PC-9 (cell line): ENCODE measurements at regions of chr7 and their contacts with region 1.

Region 1: GRCh38 chr7:151936207-151936606 is 20.0 kb upstream of the GALNTL5 start:
- DNase-seq: no peak
- H3K4me3 ChIP-seq: no peak overlapping the region
- H3K27ac ChIP-seq: no peak overlapping the region
- H3K4me1 ChIP-seq: peaks cover 29% of the 10 kb centered on the region
- H3K27me3 ChIP-seq: peaks cover 5% of the 10 kb centered on the region; the same call in 1 of the 2 replicates
- CTCF ChIP-seq: no peak

Region 2: DNA sequence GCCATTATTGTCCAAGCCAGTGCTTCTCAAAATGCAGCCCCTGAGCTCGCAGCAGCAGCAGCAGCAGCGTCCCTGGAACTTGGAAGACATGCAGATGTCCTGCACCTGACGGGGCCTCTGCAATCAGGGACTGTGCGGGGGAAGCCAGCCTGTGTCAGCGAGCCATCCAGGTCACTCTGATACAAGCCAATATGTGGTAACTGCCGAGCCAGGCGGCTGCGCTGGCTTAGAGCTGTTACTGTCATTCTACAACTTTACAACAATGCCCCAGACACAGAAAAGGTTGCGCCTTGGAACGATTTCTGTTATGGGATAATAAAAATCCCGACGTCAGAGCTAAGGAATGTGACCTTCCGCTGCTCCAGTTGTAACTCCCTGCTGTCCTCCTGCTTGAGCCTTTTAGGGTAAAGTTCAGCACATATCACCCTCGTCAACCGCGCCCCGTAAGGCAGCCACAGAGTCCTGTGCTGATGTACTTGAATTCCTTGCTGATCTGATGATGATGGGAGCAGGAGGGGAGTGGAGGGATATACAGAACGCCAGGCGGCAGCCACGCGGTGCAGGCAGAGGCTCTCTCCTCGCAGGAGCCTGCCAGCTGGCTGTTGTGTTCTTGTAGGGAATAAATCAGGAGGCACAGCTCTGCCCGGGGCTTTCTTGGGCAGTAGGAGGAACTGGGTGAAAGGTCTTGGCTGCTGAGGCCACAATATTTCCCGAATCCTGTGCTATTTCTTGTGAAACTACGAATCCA is 476.3 kb before region 1 on chr7:
- CTCF ChIA-PET with region 1: no interaction called
- POLR2A ChIA-PET with region 1: no interaction called
- intact Hi-C with region 1: loop called (anchors 2 kb)
- DNase-seq: peak; percentile 86 to 97
- H3K4me3 ChIP-seq: peak overlapping the region; percentile 44; the same call in 1 of the 2 replicates
- H3K27ac ChIP-seq: peak overlapping the region; percentile 75
- H3K4me1 ChIP-seq: peaks cover 29% of the 10 kb centered on the region
- H3K27me3 ChIP-seq: no peaks in the 10 kb centered on the region
- CTCF ChIP-seq: no peak

Region 3: DNA sequence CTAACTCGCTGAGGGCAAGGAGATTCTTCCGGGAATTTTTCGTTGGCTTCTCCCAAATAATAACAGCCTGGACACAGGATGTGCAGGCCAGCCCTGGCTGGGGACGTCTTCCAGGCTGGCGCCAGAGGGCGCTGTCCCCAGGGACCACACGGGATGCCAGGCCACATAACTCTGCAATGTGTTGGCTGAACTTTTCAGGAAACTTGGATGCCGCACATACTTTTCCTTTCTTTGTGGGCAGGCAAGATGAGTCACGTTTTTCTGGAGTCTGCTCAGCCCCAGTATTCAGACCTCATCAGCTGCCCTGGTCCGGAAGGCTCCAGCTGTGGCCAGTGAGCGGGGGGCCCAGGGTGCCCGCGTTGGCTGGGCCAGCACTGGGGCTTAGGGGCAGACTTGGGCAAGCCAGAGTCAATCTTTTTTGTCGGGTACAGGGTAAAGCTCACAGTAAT is 182.0 kb before region 1 on chr7:
- CTCF ChIA-PET with region 1: no interaction called
- POLR2A ChIA-PET with region 1: no interaction called
- intact Hi-C with region 1: loop called (anchors 2 kb)
- DNase-seq: peak; percentile 93 to 97
- H3K4me3 ChIP-seq: no peak overlapping the region
- H3K27ac ChIP-seq: no peak overlapping the region
- H3K4me1 ChIP-seq: peaks cover 15% of the 10 kb centered on the region
- H3K27me3 ChIP-seq: no peaks in the 10 kb centered on the region
- CTCF ChIP-seq: peak; percentile 99

Region 4: DNA sequence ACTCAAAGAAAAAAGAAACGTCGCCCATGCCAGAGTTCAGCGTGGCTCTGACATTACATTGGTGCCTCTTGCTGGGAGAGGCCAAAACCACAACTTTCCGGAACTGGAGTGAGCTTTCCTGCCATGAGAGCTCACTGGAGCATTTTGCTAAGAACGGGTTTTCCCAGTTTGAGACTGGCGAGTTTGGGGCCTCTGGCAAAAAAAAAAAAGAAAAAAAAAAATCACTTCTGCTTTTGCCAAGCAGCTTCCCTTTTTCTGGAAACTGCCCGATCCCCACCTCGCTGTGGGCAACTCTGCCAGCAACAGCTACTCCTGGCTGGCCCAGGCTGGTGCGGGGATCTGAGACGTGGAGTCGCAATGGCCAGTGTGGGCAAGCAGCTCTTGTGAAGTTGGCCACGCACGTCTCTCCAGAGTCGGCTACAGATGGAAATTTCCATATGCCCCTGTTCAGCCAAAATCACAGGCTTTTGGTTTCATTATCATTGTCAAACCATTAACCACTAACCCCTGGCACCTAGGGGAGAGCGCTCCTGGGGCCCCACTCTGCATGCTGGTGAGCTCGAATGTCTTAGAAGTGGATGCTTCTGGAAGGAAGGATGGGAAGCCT is 85.0 kb before region 1 on chr7:
- CTCF ChIA-PET with region 1: no interaction called
- POLR2A ChIA-PET with region 1: no interaction called
- intact Hi-C with region 1: loop called (anchors 1 kb)
- DNase-seq: peak; percentile 77 to 89
- H3K4me3 ChIP-seq: peak overlapping the region; percentile 38; the same call in 1 of the 2 replicates
- H3K27ac ChIP-seq: peak overlapping the region; percentile 30
- H3K4me1 ChIP-seq: peaks cover 17% of the 10 kb centered on the region
- H3K27me3 ChIP-seq: peaks cover 2% of the 10 kb centered on the region; the same call in 1 of the 2 replicates
- CTCF ChIP-seq: no peak

Region 5: DNA sequence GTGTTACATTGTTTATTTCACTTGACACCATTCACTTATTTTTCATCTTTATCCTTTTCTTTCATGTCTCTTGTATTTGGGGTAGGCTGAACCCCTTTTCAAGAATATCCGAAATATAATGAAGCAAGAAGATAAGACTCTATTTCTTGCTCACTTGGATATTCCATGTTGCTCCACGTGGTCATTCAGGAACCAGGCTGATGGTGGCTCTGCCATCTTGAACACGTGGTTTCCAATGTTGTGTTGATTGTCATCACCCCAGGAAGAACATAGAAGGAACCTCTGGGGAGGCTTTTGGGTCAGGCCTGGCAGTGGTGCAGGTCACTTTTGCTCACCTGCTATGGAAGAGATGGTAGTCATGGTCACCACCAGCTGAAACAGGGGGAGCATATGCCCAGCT is 10.7 kb after region 1 on chr7:
- CTCF ChIA-PET with region 1: no interaction called
- POLR2A ChIA-PET with region 1: no interaction called
- intact Hi-C with region 1: no loop called
- DNase-seq: no peak
- H3K4me3 ChIP-seq: no peak overlapping the region
- H3K27ac ChIP-seq: no peak overlapping the region
- H3K4me1 ChIP-seq: no peaks in the 10 kb centered on the region
- H3K27me3 ChIP-seq: peaks cover 68% of the 10 kb centered on the region
- CTCF ChIP-seq: no peak

Region 6: GRCh38 chr7:151987748-151988529 is 51.7 kb after region 1 on chr7:
- CTCF ChIA-PET with region 1: no interaction called
- POLR2A ChIA-PET with region 1: no interaction called
- intact Hi-C with region 1: loop called (anchors 5 kb)
- DNase-seq: no peak
- H3K4me3 ChIP-seq: no peak overlapping the region
- H3K27ac ChIP-seq: no peak overlapping the region
- H3K4me1 ChIP-seq: no peaks in the 10 kb centered on the region
- H3K27me3 ChIP-seq: peaks cover 23% of the 10 kb centered on the region
- CTCF ChIP-seq: no peak